ENCODE measurements at regions of chr5 and their contacts with region 1.

Region 1: GRCh38 chr5:671459-672328 is 21.5 kb downstream of the TPPP start:
- DNase-seq: peak in 1 of 2 donors; percentile 78
- H3K4me3 ChIP-seq: peak overlapping the region in 1 of 2 donors; percentile 16
- H3K27ac ChIP-seq: no peak overlapping the region
- H3K4me1 ChIP-seq: peaks cover 14 to 33% of the 10 kb centered on the region in 2 donors
- H3K27me3 ChIP-seq: no peaks in the 10 kb centered on the region
- CTCF ChIP-seq: peak; percentile 73 to 94 (median 89)

Region 2: GRCh38 chr5:565782-566440 is 105.8 kb before region 1 on chr5:
- intact Hi-C with region 1: no loop called
- DNase-seq: peak in 1 of 2 donors; percentile 45
- H3K4me3 ChIP-seq: no peak overlapping the region
- H3K27ac ChIP-seq: no peak overlapping the region
- H3K4me1 ChIP-seq: no peaks in the 10 kb centered on the region
- H3K27me3 ChIP-seq: no peaks in the 10 kb centered on the region
- CTCF ChIP-seq: no peak

Region 3: GRCh38 chr5:776792-777711 is 105.4 kb after region 1 on chr5:
- intact Hi-C with region 1: loop called (anchors 10 kb)
- DNase-seq: no peak
- H3K4me3 ChIP-seq: no peak overlapping the region
- H3K27ac ChIP-seq: no peak overlapping the region
- H3K4me1 ChIP-seq: no peaks in the 10 kb centered on the region
- H3K27me3 ChIP-seq: no peaks in the 10 kb centered on the region
- CTCF ChIP-seq: no peak

Region 4: DNA sequence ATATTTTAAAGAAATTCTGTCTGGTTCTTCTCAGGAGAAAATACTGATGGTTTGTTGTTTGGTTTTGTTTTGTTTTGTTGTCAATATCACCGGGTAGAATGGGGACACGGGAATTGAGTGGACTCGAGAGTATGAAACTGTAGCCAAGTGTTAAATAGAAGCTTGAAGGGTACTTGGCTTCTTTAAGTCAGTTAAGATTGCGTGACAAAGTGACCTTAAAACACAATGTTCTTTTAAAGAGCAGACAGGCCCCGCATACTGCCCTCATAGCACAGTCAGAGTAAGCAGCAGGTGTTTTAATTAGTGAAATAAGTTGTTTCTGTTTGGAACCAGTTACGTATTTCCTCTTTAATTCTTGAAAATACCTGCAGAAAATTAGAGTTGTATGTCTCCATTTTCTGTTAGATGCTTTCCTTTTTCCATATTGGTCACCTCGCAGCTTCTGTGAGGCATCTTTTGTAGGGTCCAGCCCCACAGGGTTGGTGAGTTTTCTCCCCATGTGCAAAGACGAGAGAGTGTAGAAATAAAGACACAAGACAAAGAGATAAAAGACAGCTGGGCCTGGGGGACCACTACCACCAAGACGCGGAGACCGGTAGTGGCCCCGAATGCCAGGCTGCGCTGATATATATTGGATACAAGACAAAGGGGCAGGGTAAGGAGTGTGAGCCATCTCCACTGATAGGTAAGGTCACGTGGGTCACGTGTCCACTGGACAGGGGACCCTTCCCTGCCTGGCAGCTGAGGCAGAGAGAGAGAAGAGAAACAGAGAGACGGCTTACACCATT is 230.6 kb after region 1 on chr5:
- intact Hi-C with region 1: loop called (anchors 2 kb)
- DNase-seq: peak in 1 of 2 donors; percentile 53
- H3K4me3 ChIP-seq: no peak overlapping the region
- H3K27ac ChIP-seq: no peak overlapping the region
- H3K4me1 ChIP-seq: no peaks in the 10 kb centered on the region
- H3K27me3 ChIP-seq: no peaks in the 10 kb centered on the region
- CTCF ChIP-seq: no peak

Measured in ascending aorta (tissue), 2 donors.